Heart left ventricle (tissue), 16 donors: ENCODE measurements at regions of chr14 and their contacts with region 1.

Region 1: GRCh38 chr14:36941783-36942521 is 230.5 kb downstream of the SLC25A21 start:
- DNase-seq: peak; percentile 34 to 78 (median 46)
- ATAC-seq: peak in 3 of 4 donors; percentile 37 to 81 (median 73)
- H3K4me3 ChIP-seq: no peak overlapping the region
- H3K27ac ChIP-seq: no peak overlapping the region
- H3K4me1 ChIP-seq: no peaks in the 10 kb centered on the region
- H3K27me3 ChIP-seq: peaks cover 0 to 13% (median 0%) of the 10 kb centered on the region in 9 donors
- CTCF ChIP-seq: peak; percentile 87 to 97 (median 94)
- POLR2A ChIP-seq: no peak

Region 2: DNA sequence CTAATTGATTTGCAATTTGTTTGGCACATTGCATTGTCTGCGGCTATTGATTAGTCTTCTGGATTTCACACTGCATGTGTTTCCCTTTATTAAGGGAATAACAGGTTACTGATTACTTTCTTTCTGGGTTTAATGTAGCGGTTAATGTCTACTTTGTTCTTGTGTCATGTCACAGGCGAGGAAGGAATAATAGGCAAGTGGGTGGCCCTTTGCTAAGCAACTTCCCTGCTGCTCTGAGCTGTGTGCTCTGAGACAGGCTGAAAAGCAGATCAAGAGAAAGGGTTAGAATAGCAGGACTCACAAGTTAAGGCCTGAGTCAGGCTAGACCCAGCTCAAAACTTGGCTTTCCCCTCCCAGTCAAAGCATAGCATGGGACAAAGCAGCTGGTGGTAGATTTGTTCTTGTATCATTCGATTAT is 499.1 kb before region 1 on chr14:
- intact Hi-C with region 1: no loop called
- DNase-seq: no peak
- ATAC-seq: no peak
- H3K4me3 ChIP-seq: no peak overlapping the region
- H3K27ac ChIP-seq: no peak overlapping the region
- H3K4me1 ChIP-seq: no peaks in the 10 kb centered on the region
- H3K27me3 ChIP-seq: peaks cover 0 to 55% (median 8%) of the 10 kb centered on the region in 9 donors
- CTCF ChIP-seq: no peak
- POLR2A ChIP-seq: no peak

Region 3: GRCh38 chr14:36604757-36605505 is 337.0 kb before region 1 on chr14:
- intact Hi-C with region 1: no loop called
- DNase-seq: peak in 2 of 5 donors; percentile 20 to 23
- ATAC-seq: peak in 1 of 4 donors; percentile 51
- H3K4me3 ChIP-seq: no peak overlapping the region
- H3K27ac ChIP-seq: no peak overlapping the region
- H3K4me1 ChIP-seq: no peaks in the 10 kb centered on the region
- H3K27me3 ChIP-seq: peaks cover 0 to 37% (median 7%) of the 10 kb centered on the region in 9 donors
- CTCF ChIP-seq: peak; percentile 67 to 86 (median 72)
- POLR2A ChIP-seq: no peak

Region 4: DNA sequence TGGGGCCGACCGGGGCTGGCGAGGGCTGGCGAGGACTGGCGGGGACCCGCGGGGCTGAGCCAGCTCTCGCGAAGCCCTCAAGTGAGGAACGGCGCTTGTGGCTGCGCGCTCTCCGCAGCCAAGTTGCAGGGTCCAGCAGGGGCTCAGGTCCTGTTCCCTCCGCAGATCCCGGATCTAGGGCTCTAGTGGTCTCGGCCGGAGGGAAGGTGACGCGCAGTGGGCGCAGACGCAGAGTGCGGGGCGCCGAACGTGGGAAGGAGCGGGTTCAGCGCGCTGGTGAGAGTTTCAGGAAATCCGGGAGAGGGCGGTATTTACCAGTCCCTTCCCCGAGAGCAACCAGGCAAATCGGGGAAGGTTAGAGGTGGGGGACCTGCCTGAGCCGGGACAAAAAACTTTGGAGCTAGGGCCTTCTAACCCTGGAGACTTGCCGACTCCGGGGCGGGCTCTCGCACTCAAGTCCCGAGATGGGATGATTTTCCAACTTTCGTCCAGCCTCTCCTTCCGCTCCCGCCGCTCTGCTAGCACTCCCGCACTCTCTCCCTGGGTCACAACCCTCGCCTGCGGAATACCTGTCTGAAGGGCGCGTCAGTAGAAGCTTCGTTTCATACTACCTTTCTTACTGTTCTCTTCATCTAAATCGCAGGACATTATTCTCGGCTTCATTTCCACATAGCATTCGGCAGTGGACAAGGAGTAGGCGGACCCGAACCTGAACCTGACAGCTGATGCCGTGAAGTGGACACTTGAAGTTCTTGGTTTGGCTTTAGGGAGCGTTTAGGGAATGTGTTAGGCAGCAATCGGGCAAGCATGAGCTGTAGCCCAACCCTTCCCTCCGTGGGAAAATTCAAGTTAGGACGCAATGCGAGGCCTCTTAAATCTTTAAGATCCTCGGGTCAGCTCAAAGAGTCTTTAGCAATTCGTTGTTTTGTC is 293.9 kb before region 1 on chr14:
- intact Hi-C with region 1: loop called in 9 of 10 experiments (anchors 2 to 10 kb)
- DNase-seq: peak in 1 of 5 donors; percentile 25
- ATAC-seq: peak in 3 of 4 donors; percentile 68 to 87 (median 78)
- H3K4me3 ChIP-seq: peak overlapping the region in 11 of 12 donors; percentile 2 to 42 (median 32)
- H3K27ac ChIP-seq: no peak overlapping the region
- H3K4me1 ChIP-seq: peaks cover 0 to 19% (median 13%) of the 10 kb centered on the region in 12 donors
- H3K27me3 ChIP-seq: peaks cover 43 to 97% (median 80%) of the 10 kb centered on the region in 9 donors
- CTCF ChIP-seq: peak in 10 of 12 donors; percentile 10 to 53 (median 38)
- POLR2A ChIP-seq: no peak

Region 5: GRCh38 chr14:36655963-36656686 is 285.8 kb before region 1 on chr14:
- intact Hi-C with region 1: loop called in 3 of 10 experiments (anchors 5 to 10 kb)
- DNase-seq: no peak
- ATAC-seq: peak in 1 of 4 donors; percentile 20
- H3K4me3 ChIP-seq: no peak overlapping the region
- H3K27ac ChIP-seq: no peak overlapping the region
- H3K4me1 ChIP-seq: peaks cover 0 to 42% (median 20%) of the 10 kb centered on the region in 12 donors
- H3K27me3 ChIP-seq: peaks cover 83 to 100% (median 100%) of the 10 kb centered on the region in 9 donors
- CTCF ChIP-seq: peak in 9 of 12 donors; percentile 26 to 47 (median 33)
- POLR2A ChIP-seq: no peak